ENCODE measurements at regions of chr10 and their contacts with region 1.

Region 1: DNA sequence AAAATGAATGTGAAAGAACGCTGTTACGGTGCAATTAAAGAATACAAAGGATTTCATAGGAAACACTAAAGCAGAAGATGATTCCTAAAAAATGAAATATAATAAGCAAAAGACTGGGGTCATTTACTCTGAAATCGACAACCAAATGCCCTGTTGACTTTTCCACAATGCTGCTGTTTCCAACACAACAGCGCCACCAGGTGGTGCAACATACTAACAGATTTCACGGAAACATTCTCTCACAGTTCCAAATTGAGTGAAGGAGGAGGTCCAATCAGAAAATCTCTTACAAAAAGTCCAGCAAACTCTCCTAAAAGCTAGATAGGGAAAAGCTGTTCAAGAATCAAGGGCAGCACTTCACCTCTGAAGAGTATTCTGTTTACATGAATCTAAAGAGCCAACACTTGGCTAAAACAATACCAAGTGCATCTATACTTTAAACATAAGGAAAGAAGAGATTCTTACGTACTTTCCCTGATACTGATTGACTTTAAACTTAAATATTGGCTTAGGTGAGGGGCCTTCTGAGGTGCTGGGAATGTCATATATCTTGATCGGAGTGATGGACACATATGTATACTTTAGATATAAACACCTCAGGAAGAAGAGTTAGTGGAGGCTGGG is 55.9 kb downstream of the UPF2 start:
- DNase-seq: peak; percentile 92
- H3K4me3 ChIP-seq: no peak overlapping the region
- H3K27ac ChIP-seq: no peak overlapping the region
- H3K4me1 ChIP-seq: peaks cover 0 to 8% (median 6%) of the 10 kb centered on the region in 4 donors
- H3K27me3 ChIP-seq: no peaks in the 10 kb centered on the region
- CTCF ChIP-seq: peak; percentile 66 to 76 (median 76)
- EP300 ChIP-seq: no peak
- POLR2A ChIP-seq: no peak

Region 2: DNA sequence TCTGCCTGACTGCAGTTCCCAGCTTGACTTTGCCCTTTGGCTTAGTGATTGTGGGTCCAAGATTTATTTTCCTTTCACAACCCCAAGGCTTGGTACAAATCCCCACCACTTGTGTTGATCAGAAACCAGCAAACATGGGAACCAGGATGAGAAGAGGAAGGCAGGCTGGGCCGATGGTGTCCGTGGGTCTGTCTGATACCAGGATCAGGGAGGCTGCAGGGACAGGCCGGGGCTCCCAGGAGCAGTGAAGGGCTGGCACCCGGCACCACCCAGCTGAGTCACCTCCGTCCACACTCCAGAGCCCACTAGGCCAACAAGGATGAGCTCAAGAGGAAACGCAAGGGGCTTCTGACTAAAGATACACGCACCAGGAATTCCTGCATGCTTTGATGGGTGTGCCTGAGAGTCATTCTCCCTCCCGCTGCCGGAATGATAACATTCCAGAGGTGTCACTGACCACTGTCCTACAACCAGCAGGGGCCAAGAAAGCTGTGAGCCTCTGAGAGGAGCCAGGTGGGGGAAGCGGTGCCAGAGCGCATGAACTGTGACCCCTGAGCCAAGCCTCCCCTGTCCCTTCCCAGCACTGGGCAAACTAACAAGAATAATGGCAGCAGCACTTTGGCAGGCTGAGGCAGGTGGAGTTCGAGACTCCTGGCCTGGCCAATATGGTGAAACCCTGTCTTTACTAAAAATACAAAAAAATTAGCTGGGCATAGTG is 192.8 kb before region 1 on chr10:
- intact Hi-C with region 1: loop called (anchors 10 kb)
- DNase-seq: no peak
- H3K4me3 ChIP-seq: no peak overlapping the region
- H3K27ac ChIP-seq: no peak overlapping the region
- H3K4me1 ChIP-seq: peaks cover 0 to 4% (median 0%) of the 10 kb centered on the region in 4 donors
- H3K27me3 ChIP-seq: peaks cover 0 to 10% (median 0%) of the 10 kb centered on the region in 4 donors
- CTCF ChIP-seq: no peak
- EP300 ChIP-seq: no peak
- POLR2A ChIP-seq: no peak

Region 3: GRCh38 chr10:12165999-12166775 is 179.5 kb after region 1 on chr10:
- intact Hi-C with region 1: no loop called
- DNase-seq: no peak
- H3K4me3 ChIP-seq: no peak overlapping the region
- H3K27ac ChIP-seq: no peak overlapping the region
- H3K4me1 ChIP-seq: no peaks in the 10 kb centered on the region
- H3K27me3 ChIP-seq: no peaks in the 10 kb centered on the region
- CTCF ChIP-seq: no peak
- EP300 ChIP-seq: no peak
- POLR2A ChIP-seq: no peak

Region 4: DNA sequence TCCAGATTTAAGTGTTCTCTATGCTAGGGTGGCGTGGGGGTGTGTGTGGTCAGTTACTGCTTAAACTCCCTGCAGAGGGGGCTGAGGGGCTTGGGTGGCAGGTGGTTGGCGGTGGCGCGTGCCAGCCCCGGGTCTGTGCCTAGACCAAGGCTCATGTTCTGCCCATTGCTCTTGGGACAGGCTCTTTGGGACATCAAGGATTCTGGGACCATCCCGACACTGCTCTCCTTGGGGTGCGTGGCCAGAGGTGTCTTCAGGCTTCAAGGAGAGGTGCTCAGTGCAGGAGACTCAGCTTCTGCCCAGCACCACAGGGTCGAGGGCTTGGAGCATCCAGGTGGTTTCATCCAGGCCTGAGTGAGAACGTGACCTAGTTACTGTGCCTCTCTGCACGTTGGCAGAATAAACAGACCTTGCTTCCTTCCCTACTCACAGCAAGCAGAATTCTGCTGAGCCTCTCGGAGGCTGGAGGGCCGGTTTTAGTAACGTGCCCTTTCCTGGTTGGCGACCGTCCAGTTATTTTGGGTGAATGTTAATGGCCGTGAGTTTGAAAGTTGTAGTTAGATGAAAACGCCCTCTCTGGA is 402.5 kb after region 1 on chr10:
- intact Hi-C with region 1: no loop called
- DNase-seq: no peak
- H3K4me3 ChIP-seq: no peak overlapping the region
- H3K27ac ChIP-seq: peak overlapping the region in 3 of 4 donors; percentile 50 to 57 (median 55)
- H3K4me1 ChIP-seq: peaks cover 18 to 37% (median 31%) of the 10 kb centered on the region in 4 donors
- H3K27me3 ChIP-seq: no peaks in the 10 kb centered on the region
- CTCF ChIP-seq: no peak
- EP300 ChIP-seq: no peak
- POLR2A ChIP-seq: no peak